MCF 10A (cell line): ENCODE measurements at regions of chr3 and their contacts with region 1.

Region 1: GRCh38 chr3:195894780-195895607 is 13.4 kb downstream of the TNK2 start:
- DNase-seq: peak; percentile 88
- H3K4me3 Mint-ChIP-seq: peak overlapping the region; percentile 76
- H3K27ac Mint-ChIP-seq: peak overlapping the region; percentile 91
- H3K4me1 Mint-ChIP-seq: peaks cover 41% of the 10 kb centered on the region
- H3K27me3 Mint-ChIP-seq: no peaks in the 10 kb centered on the region
- CTCF ChIP-seq: peak; percentile 79

Region 2: GRCh38 chr3:195873971-195874370 is 21.0 kb before region 1 on chr3:
- CTCF ChIA-PET with region 1: interaction called, 24 read pairs
- POLR2A ChIA-PET with region 1: interaction called, 7 read pairs
- intact Hi-C with region 1: no loop called
- DNase-seq: no peak
- H3K4me3 Mint-ChIP-seq: no peak overlapping the region
- H3K27ac Mint-ChIP-seq: no peak overlapping the region
- H3K4me1 Mint-ChIP-seq: peaks cover 10% of the 10 kb centered on the region
- H3K27me3 Mint-ChIP-seq: no peaks in the 10 kb centered on the region
- CTCF ChIP-seq: no peak

Region 3: GRCh38 chr3:195909644-195910508 is 14.9 kb after region 1 on chr3:
- CTCF ChIA-PET with region 1: interaction called, 187 read pairs
- POLR2A ChIA-PET with region 1: interaction called, 254 read pairs
- intact Hi-C with region 1: loop called (anchors 1 kb)
- DNase-seq: peak; percentile 81
- H3K4me3 Mint-ChIP-seq: peak overlapping the region; percentile 83
- H3K27ac Mint-ChIP-seq: no peak overlapping the region
- H3K4me1 Mint-ChIP-seq: peaks cover 46% of the 10 kb centered on the region
- H3K27me3 Mint-ChIP-seq: no peaks in the 10 kb centered on the region
- CTCF ChIP-seq: no peak

Region 4: DNA sequence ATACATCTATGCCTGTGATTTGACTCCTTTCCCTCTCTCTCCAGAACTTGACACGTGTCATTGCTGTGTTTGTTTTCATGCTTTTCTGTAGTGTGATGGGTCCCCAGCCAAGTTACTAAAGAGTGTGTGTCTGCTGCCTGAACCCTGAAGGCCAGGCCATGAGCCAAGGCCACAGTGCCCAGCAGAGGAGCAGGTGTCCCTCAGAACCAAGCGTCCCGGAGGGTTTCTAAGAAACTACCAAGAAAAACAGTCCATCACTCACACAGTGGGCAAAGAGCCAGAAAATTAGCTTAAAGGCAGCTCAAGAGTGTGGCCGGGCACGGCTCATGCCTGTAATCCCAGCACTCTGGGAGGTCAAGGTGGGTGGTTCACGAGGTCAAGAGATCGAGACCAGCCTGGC is 708.7 kb after region 1 on chr3:
- CTCF ChIA-PET with region 1: no interaction called
- POLR2A ChIA-PET with region 1: no interaction called
- intact Hi-C with region 1: no loop called
- DNase-seq: peak; percentile 16
- H3K4me3 Mint-ChIP-seq: no peak overlapping the region
- H3K27ac Mint-ChIP-seq: no peak overlapping the region
- H3K4me1 Mint-ChIP-seq: no peaks in the 10 kb centered on the region
- H3K27me3 Mint-ChIP-seq: no peaks in the 10 kb centered on the region
- CTCF ChIP-seq: no peak